ENCODE measurements at regions of chr7 and their contacts with region 1.

Region 1: DNA sequence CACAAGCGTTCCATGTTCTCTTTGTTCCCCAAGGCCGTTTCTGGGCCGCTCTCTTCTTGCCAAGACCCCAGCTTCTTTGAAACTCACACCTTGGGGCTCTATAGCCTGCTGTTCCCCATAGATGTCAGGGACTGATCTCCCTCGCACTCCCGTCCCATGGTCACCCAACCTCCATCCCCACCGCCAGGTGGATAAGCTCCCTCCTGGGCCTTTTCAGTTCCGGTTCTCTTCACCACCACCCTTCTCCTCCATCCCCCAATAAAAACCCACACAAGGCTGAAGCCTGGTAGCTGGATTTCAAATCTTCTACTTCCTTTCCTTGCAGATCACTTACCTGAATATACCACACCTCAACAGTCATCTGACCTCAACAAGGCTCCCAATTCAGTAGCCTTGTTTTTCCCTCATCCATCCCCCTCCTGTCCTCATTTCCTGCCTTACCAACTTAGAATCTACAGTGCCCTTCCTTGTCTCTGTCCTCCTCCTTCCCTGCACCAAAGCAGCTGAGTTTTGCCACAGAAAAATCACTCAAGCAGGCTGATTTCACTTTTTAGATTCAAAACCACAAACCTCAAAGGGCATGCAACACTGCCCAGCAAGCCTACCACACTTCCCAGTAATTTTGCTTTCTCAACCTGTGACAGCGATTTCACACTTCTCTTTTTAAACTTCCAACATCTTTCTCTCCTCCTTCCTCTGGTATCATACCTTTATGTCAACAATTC is 7.7 kb downstream of the SLC37A3 start:
- DNase-seq: peak in 1 of 2 experiments; percentile 47
- H3K4me3 ChIP-seq: no peak overlapping the region
- H3K27ac ChIP-seq: no peak overlapping the region; the same call in 1 of the 2 replicates
- H3K4me1 ChIP-seq: peaks cover 4 to 13% (median 11%) of the 10 kb centered on the region in 4 experiments
- H3K27me3 ChIP-seq: no peaks in the 10 kb centered on the region
- CTCF ChIP-seq: no peak
- EP300 ChIP-seq: no peak
- POLR2A ChIP-seq: no peak
- RAD21 ChIP-seq: no peak

Region 2: DNA sequence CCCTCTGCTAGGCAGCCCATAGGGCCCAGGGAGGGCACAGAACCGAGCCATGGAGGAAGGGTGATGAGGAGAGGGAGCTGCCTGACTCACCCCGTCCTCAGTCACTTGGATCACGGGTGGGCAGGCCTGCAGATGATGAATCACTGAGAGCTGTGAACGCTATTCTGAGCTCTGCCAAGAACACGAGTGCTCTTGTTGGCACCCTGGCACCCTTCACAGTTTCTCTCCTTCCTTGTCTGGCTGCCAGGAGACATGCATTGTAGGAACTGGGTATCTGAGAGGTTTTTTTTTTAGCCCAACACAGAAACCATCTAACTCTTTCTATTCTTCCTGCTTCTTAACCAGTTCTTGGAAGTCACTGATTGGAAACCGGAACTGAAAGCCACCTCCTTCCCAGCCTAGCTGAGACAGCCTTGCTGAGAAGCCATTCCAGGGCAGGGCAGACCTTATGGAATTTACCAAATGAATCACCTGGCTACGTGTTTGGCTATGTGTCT is 74.4 kb before region 1 on chr7:
- CTCF ChIA-PET with region 1: no interaction called
- POLR2A ChIA-PET with region 1: no interaction called
- DNase-seq: no peak
- H3K4me3 ChIP-seq: no peak overlapping the region
- H3K27ac ChIP-seq: no peak overlapping the region
- H3K4me1 ChIP-seq: no peaks in the 10 kb centered on the region
- H3K27me3 ChIP-seq: no peaks in the 10 kb centered on the region
- CTCF ChIP-seq: no peak
- EP300 ChIP-seq: no peak
- POLR2A ChIP-seq: no peak
- RAD21 ChIP-seq: no peak

Region 3: DNA sequence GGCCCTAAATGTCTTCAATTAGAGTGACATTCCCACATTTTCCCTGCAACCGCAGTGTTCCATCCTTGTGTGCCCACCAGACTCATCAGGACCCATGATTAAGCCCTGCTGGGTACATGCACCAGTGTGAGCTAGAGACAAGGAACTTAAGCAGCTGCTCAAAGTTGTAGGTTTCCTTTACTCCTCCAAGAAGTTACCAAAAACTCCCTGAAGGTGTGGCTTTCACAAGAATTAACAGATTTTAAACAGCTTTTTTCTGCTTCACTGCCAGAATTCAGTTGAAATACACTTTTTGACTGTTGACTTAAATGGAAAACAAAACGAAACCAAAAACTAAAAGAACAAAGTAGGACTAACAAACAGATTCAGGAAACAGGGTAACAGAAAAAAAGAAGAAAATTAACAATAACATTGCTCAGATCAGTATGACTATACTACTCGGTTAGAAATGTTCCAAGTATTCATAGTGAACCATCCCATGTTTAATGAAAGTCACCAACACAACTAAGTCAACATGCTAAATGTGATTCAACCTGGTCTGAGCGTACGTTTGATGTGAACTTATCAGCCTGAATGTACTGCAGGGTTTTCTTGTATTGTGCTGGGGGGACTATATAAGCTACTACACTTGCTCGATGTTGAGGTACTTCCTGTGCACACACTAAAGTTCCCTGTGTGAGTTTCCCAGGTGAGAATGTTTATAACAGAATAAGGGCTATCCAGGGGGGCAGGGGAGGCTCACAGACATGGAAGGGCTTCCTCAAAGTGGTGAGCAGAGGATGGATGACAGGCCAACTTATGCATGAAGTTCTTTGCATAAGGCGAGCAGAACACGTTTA is 14.5 kb before region 1 on chr7:
- CTCF ChIA-PET with region 1: no interaction called
- POLR2A ChIA-PET with region 1: no interaction called
- DNase-seq: no peak
- H3K4me3 ChIP-seq: no peak overlapping the region
- H3K27ac ChIP-seq: no peak overlapping the region
- H3K4me1 ChIP-seq: no peaks in the 10 kb centered on the region
- H3K27me3 ChIP-seq: no peaks in the 10 kb centered on the region
- CTCF ChIP-seq: no peak
- EP300 ChIP-seq: no peak
- POLR2A ChIP-seq: no peak
- RAD21 ChIP-seq: no peak

Region 4: GRCh38 chr7:140403878-140404564 is 13.4 kb after region 1 on chr7 and contains the start of gene RAB19:
- CTCF ChIA-PET with region 1: no interaction called
- POLR2A ChIA-PET with region 1: interaction called, 10 read pairs
- DNase-seq: peak; percentile 64 to 78
- H3K4me3 ChIP-seq: peak within 1 kb of the TSS; percentile 62 to 72 (median 68)
- H3K27ac ChIP-seq: peak within 1 kb of the TSS; percentile 5; the same call in 1 of the 2 replicates
- H3K4me1 ChIP-seq: peaks cover 0 to 13% (median 2%) of the 10 kb centered on the region in 4 experiments; a peak in 4 of 7 replicates
- H3K27me3 ChIP-seq: no peaks in the 10 kb centered on the region
- CTCF ChIP-seq: no peak
- EP300 ChIP-seq: peak in 1 of 2 experiments; percentile 33; a peak in 1 of 3 replicates
- POLR2A ChIP-seq: no peak; a peak in 1 of 3 replicates
- RAD21 ChIP-seq: 0 out of 4 replicates have a peak, but pooled peaks of 1 of the 2 experiments have one; percentile 0
- total RNA-seq, gene RAB19: 9.8 TPM in 2 replicates

Measured in H1 (cell line).